ENCODE measurements at regions of chr3 and their contacts with region 1.

Region 1: GRCh38 chr3:121660356-121661171 is at the start of gene HCLS1:
- DNase-seq: peak; percentile 83
- ATAC-seq: peak; percentile 88
- H3K4me3 Mint-ChIP-seq: peak within 1 kb of the TSS; percentile 95
- H3K27ac Mint-ChIP-seq: peak within 1 kb of the TSS; percentile 97
- H3K4me1 Mint-ChIP-seq: peaks cover 50% of the 10 kb centered on the region
- H3K27me3 Mint-ChIP-seq: no peaks in the 10 kb centered on the region
- total RNA-seq, gene HCLS1: 200 to 235 TPM

Region 2: GRCh38 chr3:121641127-121641526 is 19.4 kb before region 1 on chr3:
- CTCF ChIA-PET with region 1: no interaction called
- POLR2A ChIA-PET with region 1: no interaction called
- intact Hi-C with region 1: loop called in 1 of 2 experiments (anchors 2 kb)
- DNase-seq: no peak
- ATAC-seq: peak; percentile 30
- H3K4me3 Mint-ChIP-seq: no peak overlapping the region
- H3K27ac Mint-ChIP-seq: peak overlapping the region; percentile 67
- H3K4me1 Mint-ChIP-seq: peaks cover 22% of the 10 kb centered on the region
- H3K27me3 Mint-ChIP-seq: no peaks in the 10 kb centered on the region

Region 3: DNA sequence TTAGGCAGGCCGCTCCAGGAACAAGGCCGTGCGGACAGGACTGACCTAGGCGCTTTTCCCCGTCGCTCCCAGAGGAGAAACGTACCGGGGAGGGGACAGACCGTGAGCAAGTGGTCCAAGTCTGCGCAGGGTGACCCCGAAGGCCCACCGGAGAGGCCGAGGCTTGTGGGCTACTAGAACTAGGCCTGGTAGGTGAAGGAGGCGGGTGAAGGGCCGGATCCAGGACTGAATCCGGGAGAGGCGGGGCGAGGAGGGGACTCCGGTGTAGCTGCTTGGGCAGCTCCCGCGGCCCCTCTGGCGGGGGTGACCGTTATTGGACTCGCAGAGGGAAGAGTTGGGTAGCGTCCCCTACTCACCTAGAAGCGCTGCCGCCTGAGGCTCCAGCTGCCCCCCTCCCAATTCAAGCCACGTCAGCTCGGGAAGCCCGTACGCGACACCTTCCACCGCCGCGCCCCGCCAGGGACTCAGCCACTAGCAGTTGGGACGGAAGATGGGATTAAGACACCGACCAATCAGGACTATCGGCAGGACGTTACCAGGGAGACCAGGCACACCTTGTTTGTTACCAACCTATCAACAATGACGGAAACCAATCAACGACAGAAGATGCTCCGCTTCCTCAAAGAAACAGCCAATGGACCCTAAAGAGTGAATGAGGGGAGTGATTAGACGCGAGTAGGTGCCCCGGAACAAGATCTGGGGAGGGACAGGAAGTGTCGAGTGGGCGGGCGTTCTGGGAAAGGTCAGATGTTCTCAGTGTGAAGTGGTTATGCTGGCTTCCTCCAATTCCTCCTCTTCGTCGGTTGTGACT is 88.9 kb after region 1 on chr3 and contains the start of gene GOLGB1:
- CTCF ChIA-PET with region 1: no interaction called
- POLR2A ChIA-PET with region 1: no interaction called
- intact Hi-C with region 1: loop called (anchors 1 kb)
- DNase-seq: peak; percentile 96
- ATAC-seq: peak; percentile 98
- H3K4me3 Mint-ChIP-seq: no peak within 1 kb of the TSS
- H3K27ac Mint-ChIP-seq: peak within 1 kb of the TSS; percentile 60
- H3K4me1 Mint-ChIP-seq: peaks cover 10% of the 10 kb centered on the region
- H3K27me3 Mint-ChIP-seq: no peaks in the 10 kb centered on the region
- total RNA-seq, gene GOLGB1: 19.0 to 19.5 TPM

Measured in activated CD4-positive, alpha-beta T cell treated with anti-CD3 and anti-CD28 coated beads for 36 hours (primary cell).